Sigmoid colon (tissue), 7 donors: ENCODE measurements at regions of chr5 and their contacts with region 1.

Region 1: GRCh38 chr5:18314192-18314778 is 680.0 kb downstream of the TAF11L14 start:
- DNase-seq: no peak
- H3K4me3 ChIP-seq: no peak overlapping the region
- H3K27ac ChIP-seq: no peak overlapping the region
- H3K4me1 ChIP-seq: no peaks in the 10 kb centered on the region
- H3K27me3 ChIP-seq: no peaks in the 10 kb centered on the region
- CTCF ChIP-seq: peak in 1 of 4 experiments; percentile 52
- EP300 ChIP-seq: no peak
- POLR2A ChIP-seq: no peak

Region 2: DNA sequence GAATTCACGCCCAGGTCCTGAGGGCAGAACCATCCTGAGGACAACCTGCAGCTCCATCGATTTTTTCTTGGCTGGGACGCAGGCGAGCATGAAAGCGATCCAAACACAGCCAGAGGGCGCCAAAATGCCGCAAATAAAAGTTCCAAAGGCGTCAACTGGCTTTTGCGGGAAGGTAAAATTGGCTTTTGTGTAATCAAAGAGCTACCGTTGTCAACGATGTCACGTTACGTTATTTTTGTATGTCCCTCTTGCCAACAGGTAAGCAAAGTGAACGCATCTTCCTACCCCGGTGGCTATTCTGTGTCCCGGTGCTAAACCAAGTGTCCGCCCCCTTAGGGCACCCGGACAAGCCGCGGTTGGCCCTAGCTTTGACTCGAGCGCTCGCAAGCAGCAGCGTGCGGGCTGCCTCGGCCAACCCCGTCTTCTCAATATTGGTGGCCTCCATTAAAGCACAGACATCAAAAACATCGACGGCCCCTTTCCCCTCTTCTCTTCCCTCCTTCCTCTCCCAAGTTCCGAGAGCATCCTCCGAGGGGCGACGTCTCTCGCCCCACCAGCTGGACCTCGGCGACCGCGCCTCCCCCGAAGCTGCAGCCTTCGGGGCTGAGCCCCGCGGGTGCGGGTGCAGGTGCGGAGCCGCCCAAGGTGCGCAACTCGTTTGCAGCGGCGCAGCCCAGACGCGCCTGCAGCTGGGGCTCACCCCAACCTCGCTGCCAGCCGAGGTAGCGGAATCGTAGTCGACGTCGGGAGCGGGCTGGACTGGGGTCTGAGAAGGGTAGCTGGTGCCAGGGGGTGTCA is 1097.9 kb before region 1 on chr5:
- intact Hi-C with region 1: loop called (anchors 5 kb)
- DNase-seq: peak; percentile 79
- H3K4me3 ChIP-seq: peak overlapping the region in 3 of 4 donors; percentile 45 to 54 (median 46)
- H3K27ac ChIP-seq: peak overlapping the region in 1 of 4 donors; percentile 6
- H3K4me1 ChIP-seq: peaks cover 0 to 28% (median 25%) of the 10 kb centered on the region in 4 donors
- H3K27me3 ChIP-seq: peaks cover 6 to 37% (median 32%) of the 10 kb centered on the region in 3 donors
- CTCF ChIP-seq: peak; percentile 35 to 60 (median 54)
- EP300 ChIP-seq: no peak
- POLR2A ChIP-seq: no peak

Region 3: GRCh38 chr5:18202149-18202548 is 112.1 kb before region 1 on chr5:
- intact Hi-C with region 1: no loop called
- DNase-seq: no peak
- H3K4me3 ChIP-seq: no peak overlapping the region
- H3K27ac ChIP-seq: no peak overlapping the region
- H3K4me1 ChIP-seq: no peaks in the 10 kb centered on the region
- H3K27me3 ChIP-seq: no peaks in the 10 kb centered on the region
- CTCF ChIP-seq: no peak
- EP300 ChIP-seq: no peak
- POLR2A ChIP-seq: no peak

Region 4: DNA sequence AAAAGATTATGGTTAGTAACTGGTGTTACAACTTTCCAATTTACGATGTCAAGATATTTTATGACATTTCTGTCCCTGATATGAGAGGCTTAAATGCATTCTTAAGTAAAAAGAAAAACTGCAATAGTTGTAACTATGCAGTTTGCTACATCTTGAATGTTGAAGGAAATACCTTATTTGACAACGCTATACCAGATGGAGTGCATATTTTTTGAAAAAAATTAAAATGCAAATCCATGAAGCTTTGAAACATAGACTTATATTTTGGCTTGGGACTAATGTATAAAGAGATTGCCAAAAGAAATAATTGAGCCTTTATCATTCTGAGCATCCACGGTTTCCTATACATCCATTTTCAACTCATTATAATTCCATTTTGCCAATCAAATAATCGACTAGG is 100.6 kb before region 1 on chr5:
- intact Hi-C with region 1: no loop called
- DNase-seq: no peak
- H3K4me3 ChIP-seq: no peak overlapping the region
- H3K27ac ChIP-seq: no peak overlapping the region
- H3K4me1 ChIP-seq: no peaks in the 10 kb centered on the region
- H3K27me3 ChIP-seq: no peaks in the 10 kb centered on the region
- CTCF ChIP-seq: no peak
- EP300 ChIP-seq: no peak
- POLR2A ChIP-seq: no peak